Endothelial cell of umbilical vein (primary cell): ENCODE measurements at regions of chr12 and their contacts with region 1.

Region 1: DNA sequence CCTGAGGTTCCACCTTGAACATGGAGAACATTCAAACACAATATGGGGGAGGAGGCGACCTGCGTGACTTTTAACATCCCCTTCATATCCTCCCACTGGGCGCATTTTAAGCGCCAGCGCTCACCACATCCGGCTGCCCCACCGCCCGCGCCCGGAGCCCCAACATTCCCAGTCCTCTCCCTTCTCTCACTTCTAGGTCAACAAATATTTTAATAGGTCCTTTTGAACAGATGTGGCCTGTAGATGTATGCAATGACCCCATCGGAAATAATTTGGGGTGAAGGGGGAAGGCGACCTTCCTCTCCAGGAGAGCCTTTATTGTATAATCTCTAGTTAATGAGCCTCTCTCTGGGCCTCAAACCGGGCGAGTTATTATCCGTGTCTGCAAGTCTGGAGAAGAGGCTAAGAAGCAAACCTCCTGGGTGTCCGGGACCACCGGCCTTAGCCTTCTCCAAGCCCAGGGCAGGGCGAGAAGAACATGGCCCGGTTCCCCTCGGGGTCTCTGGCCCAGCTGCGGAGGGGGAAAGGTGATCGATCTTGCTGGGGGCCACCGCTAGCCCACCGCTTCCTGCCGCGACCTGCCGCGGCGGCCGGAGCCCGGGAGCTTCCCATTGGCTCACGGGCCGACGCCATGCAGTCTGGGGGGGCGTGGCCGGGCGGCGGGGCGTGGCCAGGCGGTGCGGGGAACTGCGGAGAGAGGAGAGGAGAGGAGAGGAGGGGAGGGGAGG is 83.2 kb upstream of the HMGA2 start:
- DNase-seq: peak; percentile 82
- H3K4me3 ChIP-seq: peak overlapping the region; percentile 75 to 88 (median 81)
- H3K27ac ChIP-seq: peak overlapping the region; percentile 77
- H3K4me1 ChIP-seq: peaks cover 5% of the 10 kb centered on the region
- H3K27me3 ChIP-seq: no peaks in the 10 kb centered on the region
- CTCF ChIP-seq: no peak
- POLR2A ChIP-seq: no peak

Region 2: GRCh38 chr12:65779091-65779642 is 38.1 kb after region 1 on chr12:
- CTCF ChIA-PET with region 1: interaction called, 3 read pairs
- POLR2A ChIA-PET with region 1: no interaction called
- dilution Hi-C with region 1: no loop called
- intact Hi-C with region 1: loop called (anchors 2 kb)
- DNase-seq: peak; percentile 51
- H3K4me3 ChIP-seq: no peak overlapping the region
- H3K27ac ChIP-seq: peak overlapping the region; percentile 46
- H3K4me1 ChIP-seq: peaks cover 17% of the 10 kb centered on the region
- H3K27me3 ChIP-seq: no peaks in the 10 kb centered on the region
- CTCF ChIP-seq: no peak
- POLR2A ChIP-seq: no peak

Region 3: DNA sequence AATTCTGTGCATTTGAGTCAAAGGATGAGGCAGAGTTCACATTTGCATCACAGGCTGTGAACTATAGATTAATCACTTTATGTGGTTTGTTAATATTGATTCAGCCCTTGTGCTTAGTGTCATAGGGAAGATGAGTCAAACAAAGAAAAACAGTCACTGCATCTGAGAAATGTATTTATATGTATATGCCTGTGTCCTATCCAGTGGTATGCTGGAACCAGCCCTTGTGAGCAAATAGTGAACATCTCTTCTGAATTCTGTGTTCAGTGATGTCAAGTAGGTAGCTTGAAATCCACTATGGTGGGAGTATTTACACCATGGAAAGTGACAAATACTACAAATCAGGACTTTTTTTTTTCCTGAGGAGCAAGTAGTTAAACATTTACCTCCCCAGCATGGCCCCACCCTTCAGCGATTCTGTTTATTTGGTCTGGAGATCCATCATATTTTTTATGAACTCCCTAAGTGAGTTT is 211.7 kb after region 1 on chr12:
- CTCF ChIA-PET with region 1: no interaction called
- POLR2A ChIA-PET with region 1: no interaction called
- dilution Hi-C with region 1: no loop called
- intact Hi-C with region 1: no loop called
- DNase-seq: peak; percentile 39
- H3K4me3 ChIP-seq: no peak overlapping the region
- H3K27ac ChIP-seq: peak overlapping the region; percentile 13
- H3K4me1 ChIP-seq: peaks cover 61% of the 10 kb centered on the region
- H3K27me3 ChIP-seq: no peaks in the 10 kb centered on the region
- CTCF ChIP-seq: no peak
- POLR2A ChIP-seq: no peak